ENCODE measurements at regions of chr1 and their contacts with region 1.

Region 1: GRCh38 chr1:91021686-91022517 is at the start of gene ZNF644:
- DNase-seq: peak; percentile 95
- ATAC-seq: peak; percentile 90
- H3K4me3 Mint-ChIP-seq: peak within 1 kb of the TSS; percentile 94
- H3K27ac Mint-ChIP-seq: peak within 1 kb of the TSS; percentile 97
- H3K4me1 Mint-ChIP-seq: peaks cover 62% of the 10 kb centered on the region
- H3K27me3 Mint-ChIP-seq: no peaks in the 10 kb centered on the region
- total RNA-seq, gene ZNF644: 36.8 to 46.0 TPM

Region 2: GRCh38 chr1:90721210-90722194 is 300.4 kb before region 1 on chr1:
- CTCF ChIA-PET with region 1: no interaction called
- POLR2A ChIA-PET with region 1: no interaction called
- intact Hi-C with region 1: loop called in 1 of 2 experiments (anchors 5 kb)
- DNase-seq: peak; percentile 78
- ATAC-seq: peak; percentile 47
- H3K4me3 Mint-ChIP-seq: no peak overlapping the region
- H3K27ac Mint-ChIP-seq: no peak overlapping the region
- H3K4me1 Mint-ChIP-seq: peaks cover 56% of the 10 kb centered on the region
- H3K27me3 Mint-ChIP-seq: peaks cover 81% of the 10 kb centered on the region

Region 3: GRCh38 chr1:90850898-90851710 is 170.8 kb before region 1 on chr1:
- CTCF ChIA-PET with region 1: interaction called, 3 read pairs
- POLR2A ChIA-PET with region 1: no interaction called
- intact Hi-C with region 1: loop called in 1 of 2 experiments (anchors 1 kb)
- DNase-seq: peak; percentile 90
- ATAC-seq: peak; percentile 99
- H3K4me3 Mint-ChIP-seq: peak overlapping the region; percentile 69
- H3K27ac Mint-ChIP-seq: no peak overlapping the region
- H3K4me1 Mint-ChIP-seq: peaks cover 11% of the 10 kb centered on the region
- H3K27me3 Mint-ChIP-seq: peaks cover 54% of the 10 kb centered on the region

Region 4: GRCh38 chr1:91104712-91105111 is 82.8 kb after region 1 on chr1:
- CTCF ChIA-PET with region 1: no interaction called
- POLR2A ChIA-PET with region 1: no interaction called
- intact Hi-C with region 1: no loop called
- DNase-seq: no peak
- ATAC-seq: no peak
- H3K4me3 Mint-ChIP-seq: no peak overlapping the region
- H3K27ac Mint-ChIP-seq: no peak overlapping the region
- H3K4me1 Mint-ChIP-seq: peaks cover 10% of the 10 kb centered on the region
- H3K27me3 Mint-ChIP-seq: peaks cover 8% of the 10 kb centered on the region

Region 5: DNA sequence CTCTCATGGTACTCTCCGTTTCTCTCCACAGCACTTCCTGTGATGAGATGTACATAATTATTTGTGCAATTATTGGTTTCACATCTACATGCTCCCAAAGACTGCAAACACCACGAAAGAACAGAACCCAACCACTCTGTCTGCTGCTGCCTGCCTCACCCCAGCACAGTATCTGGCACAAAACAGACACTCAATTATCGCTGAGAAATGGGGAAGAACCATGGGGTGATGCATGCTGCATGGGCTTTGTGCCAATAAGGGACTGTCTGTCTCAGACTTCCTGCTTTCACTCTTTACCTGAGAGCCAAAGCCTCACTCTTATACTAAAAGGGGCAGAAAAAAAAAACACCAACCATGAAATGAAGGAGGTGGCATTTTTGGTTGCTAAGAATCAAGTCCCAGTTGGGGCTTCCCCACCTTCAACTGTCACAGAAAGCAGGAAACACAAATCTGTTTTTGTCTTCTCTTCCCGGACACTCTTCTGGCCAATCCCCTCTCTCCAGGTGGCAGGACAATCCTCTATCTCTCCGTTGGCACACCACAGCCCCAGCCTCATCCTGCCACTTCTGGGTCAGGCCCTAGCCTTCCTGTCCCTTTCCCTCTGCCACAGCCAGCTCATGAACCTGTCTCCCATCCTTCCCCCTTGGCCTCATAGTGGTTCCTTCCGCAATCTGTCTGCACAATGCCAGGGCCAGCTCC is 782.1 kb after region 1 on chr1:
- CTCF ChIA-PET with region 1: no interaction called
- POLR2A ChIA-PET with region 1: no interaction called
- intact Hi-C with region 1: loop called in 1 of 2 experiments (anchors 1 kb)
- DNase-seq: peak; percentile 86
- ATAC-seq: peak; percentile 80
- H3K4me3 Mint-ChIP-seq: peak overlapping the region; percentile 56
- H3K27ac Mint-ChIP-seq: peak overlapping the region; percentile 90
- H3K4me1 Mint-ChIP-seq: peaks cover 39% of the 10 kb centered on the region
- H3K27me3 Mint-ChIP-seq: peaks cover 1% of the 10 kb centered on the region

Region 6: DNA sequence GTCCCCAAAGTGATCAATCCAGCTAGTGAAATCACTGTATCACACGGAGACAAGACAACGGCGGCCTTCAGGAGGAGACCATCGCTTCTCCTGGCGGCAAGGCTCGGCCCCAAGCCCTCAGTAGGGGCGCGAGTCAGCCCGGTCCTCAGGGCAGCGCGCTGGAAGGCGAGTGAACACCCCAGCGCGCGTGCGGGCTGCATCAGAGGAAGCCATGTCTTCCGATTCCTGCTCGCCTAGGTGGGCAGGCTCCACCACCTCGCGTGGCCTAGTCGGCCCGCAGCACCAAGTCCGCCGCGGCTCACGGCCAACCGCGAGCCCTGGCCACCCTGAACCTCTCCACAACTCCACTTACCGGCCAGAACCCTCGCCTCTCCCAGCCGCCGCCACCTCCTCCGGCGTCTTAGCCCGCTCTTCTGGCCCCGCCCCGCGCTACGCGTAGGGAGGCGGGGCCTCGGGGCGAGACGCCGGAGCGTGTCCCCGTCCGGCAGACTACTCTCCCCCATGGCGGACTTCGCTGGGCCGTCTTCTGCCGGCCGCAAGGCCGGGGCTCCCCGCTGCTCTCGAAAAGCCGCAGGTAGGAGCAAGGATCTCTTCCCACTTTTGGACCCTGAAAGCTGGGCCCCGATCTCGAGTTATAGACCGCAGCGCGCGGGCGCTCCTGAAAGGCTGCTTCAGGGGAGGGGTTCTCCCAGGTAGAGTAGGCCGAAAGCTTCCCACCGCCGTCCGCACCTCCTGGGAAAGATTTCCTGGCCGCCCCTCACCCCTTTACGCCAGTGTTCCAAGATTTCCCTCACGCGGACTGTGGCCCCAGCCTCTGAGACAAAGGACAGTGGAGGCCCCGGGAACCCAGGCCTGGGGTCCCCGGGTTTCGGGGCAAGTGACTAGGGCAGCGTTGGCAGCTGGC is 1276.9 kb after region 1 on chr1 and contains the starts of genes GLMN and RPAP2:
- CTCF ChIA-PET with region 1: no interaction called
- POLR2A ChIA-PET with region 1: no interaction called
- intact Hi-C with region 1: loop called in 1 of 2 experiments (anchors 5 kb)
- DNase-seq: peak; percentile 83
- ATAC-seq: peak; percentile 98
- H3K4me3 Mint-ChIP-seq: peak within 1 kb of the TSS; percentile 84
- H3K27ac Mint-ChIP-seq: peak within 1 kb of the TSS; percentile 94
- H3K4me1 Mint-ChIP-seq: peaks cover 31% of the 10 kb centered on the region
- H3K27me3 Mint-ChIP-seq: no peaks in the 10 kb centered on the region
- total RNA-seq, gene GLMN: 10.8 to 17.6 TPM
- total RNA-seq, gene RPAP2: 33.4 to 39.0 TPM